Endothelial cell of umbilical vein (primary cell): ENCODE measurements at regions of chr16 and their contacts with region 1.

Region 1: GRCh38 chr16:30557957-30558788 is at the start of gene ZNF764:
- DNase-seq: peak; percentile 98
- H3K4me3 ChIP-seq: peak within 1 kb of the TSS; percentile 67 to 89 (median 75)
- H3K27ac ChIP-seq: peak within 1 kb of the TSS; percentile 83
- H3K4me1 ChIP-seq: peaks cover 12% of the 10 kb centered on the region
- H3K27me3 ChIP-seq: no peaks in the 10 kb centered on the region
- CTCF ChIP-seq: no peak
- POLR2A ChIP-seq: peak; percentile 93
- total RNA-seq, gene ZNF764: 10.7 and 12.1 TPM in 2 replicates

Region 2: DNA sequence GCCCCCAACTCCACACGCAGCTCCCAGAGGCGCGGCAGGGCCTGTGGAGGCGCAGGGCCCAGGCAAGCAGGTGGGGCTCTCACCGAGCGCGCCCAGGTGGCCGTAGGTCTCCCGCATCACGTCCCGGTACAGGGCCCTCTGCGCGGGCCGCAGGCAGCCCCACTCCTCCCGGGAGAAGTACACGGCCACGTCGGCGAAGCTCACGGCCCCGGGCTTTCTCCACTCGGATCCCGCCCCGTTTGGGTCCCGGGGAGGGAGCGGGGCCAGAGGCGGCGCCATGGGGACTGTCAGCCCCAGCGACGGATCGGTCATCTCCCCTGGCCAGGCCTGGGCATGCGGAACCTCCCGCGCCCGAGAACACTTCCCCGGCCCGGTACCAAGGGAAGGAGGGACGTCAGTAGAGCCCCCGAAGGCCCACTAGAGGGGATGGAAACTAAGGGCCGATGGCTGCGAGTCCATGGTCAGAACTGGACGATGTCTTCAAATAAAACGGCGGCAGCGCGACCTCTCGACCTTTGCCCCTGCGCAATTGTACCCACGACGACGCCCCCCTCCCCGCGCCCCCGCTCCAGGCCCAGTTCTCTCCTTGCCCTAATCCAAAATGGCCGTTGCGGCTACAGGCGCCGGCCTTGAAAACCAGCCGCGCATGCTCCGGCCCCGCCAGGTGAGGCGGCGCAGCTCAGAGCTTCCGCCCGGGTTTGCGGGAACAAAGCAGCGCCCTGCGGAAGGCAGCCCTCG is 23.6 kb before region 1 on chr16 and contains the start of gene ZNF747:
- CTCF ChIA-PET with region 1: interaction called, 27 read pairs
- POLR2A ChIA-PET with region 1: interaction called, 13 read pairs
- dilution Hi-C with region 1: no loop called
- intact Hi-C with region 1: loop called (anchors 1 kb)
- DNase-seq: peak; percentile 86
- H3K4me3 ChIP-seq: peak within 1 kb of the TSS; percentile 62 to 76 (median 67)
- H3K27ac ChIP-seq: peak within 1 kb of the TSS; percentile 76
- H3K4me1 ChIP-seq: peaks cover 14% of the 10 kb centered on the region
- H3K27me3 ChIP-seq: no peaks in the 10 kb centered on the region
- CTCF ChIP-seq: no peak
- POLR2A ChIP-seq: peak; percentile 76
- total RNA-seq, gene ZNF747: 7.2 and 8.6 TPM in 2 replicates

Region 3: GRCh38 chr16:30571695-30572600 is 13.8 kb after region 1 on chr16 and contains the start of gene ZNF688:
- CTCF ChIA-PET with region 1: interaction called, 10 read pairs
- POLR2A ChIA-PET with region 1: interaction called, 6 read pairs
- dilution Hi-C with region 1: no loop called
- intact Hi-C with region 1: loop called (anchors 1 kb)
- DNase-seq: peak; percentile 97
- H3K4me3 ChIP-seq: peak within 1 kb of the TSS; percentile 31 to 77 (median 76)
- H3K27ac ChIP-seq: peak within 1 kb of the TSS; percentile 78
- H3K4me1 ChIP-seq: peaks cover 16% of the 10 kb centered on the region
- H3K27me3 ChIP-seq: no peaks in the 10 kb centered on the region
- CTCF ChIP-seq: no peak
- POLR2A ChIP-seq: peak; percentile 86
- total RNA-seq, gene ZNF688: 10.5 and 10.9 TPM in 2 replicates

Region 4: DNA sequence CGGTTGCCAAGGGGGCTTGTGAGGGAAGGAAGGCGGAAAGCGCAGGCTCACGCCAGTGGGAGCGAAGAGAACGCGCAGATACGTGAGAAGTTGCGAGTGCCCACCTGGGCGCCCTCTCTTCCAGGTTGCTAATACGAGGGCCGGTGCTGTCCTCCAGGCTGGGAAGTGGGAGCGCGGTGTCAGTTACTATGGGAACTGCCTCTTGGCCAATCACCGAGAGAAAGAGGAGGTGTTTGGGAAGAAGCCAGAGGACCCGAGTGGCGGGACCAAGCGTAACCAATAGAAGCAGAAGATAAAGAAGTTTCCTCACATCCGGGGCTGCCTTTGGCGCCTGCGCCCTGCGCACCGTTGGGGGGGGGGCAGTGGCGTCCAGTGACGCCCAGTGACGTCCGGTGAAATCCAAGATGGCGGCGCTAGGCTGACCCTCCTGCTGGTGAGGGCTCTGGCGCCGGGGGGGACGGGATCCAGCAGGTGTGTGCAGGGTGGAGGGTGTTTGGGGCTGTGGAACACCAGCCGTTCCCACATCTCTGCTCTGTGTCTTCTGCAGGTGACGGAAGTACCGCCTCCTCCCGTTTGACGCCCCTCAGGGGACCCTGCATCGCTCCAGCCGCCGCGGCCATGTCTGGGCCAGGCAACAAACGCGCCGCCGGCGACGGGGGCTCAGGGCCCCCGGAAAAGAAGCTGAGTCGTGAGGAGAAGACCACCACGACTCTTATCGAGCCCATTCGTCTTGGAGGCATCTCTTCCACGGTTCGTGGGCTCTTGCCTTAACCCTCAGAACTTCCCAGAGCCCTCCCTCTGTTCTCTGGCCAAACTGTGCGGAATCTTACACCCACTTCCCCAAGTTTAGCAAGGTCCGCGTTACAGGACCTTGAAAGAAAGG is 204.0 kb after region 1 on chr16 and contains the starts of genes CFAP119 and RNF40:
- CTCF ChIA-PET with region 1: no interaction called
- POLR2A ChIA-PET with region 1: no interaction called
- dilution Hi-C with region 1: no loop called
- intact Hi-C with region 1: no loop called
- DNase-seq: peak; percentile 99
- H3K4me3 ChIP-seq: peak within 1 kb of the TSS; percentile 19 to 87 (median 75)
- H3K27ac ChIP-seq: peak within 1 kb of the TSS; percentile 47
- H3K4me1 ChIP-seq: peaks cover 15% of the 10 kb centered on the region
- H3K27me3 ChIP-seq: no peaks in the 10 kb centered on the region
- CTCF ChIP-seq: no peak
- POLR2A ChIP-seq: peak; percentile 89
- total RNA-seq, gene CFAP119: 6.5 and 7.2 TPM in 2 replicates
- total RNA-seq, gene RNF40: 97.0 and 102 TPM in 2 replicates